ENCODE measurements at regions of chr7 and their contacts with region 1.

Region 1: DNA sequence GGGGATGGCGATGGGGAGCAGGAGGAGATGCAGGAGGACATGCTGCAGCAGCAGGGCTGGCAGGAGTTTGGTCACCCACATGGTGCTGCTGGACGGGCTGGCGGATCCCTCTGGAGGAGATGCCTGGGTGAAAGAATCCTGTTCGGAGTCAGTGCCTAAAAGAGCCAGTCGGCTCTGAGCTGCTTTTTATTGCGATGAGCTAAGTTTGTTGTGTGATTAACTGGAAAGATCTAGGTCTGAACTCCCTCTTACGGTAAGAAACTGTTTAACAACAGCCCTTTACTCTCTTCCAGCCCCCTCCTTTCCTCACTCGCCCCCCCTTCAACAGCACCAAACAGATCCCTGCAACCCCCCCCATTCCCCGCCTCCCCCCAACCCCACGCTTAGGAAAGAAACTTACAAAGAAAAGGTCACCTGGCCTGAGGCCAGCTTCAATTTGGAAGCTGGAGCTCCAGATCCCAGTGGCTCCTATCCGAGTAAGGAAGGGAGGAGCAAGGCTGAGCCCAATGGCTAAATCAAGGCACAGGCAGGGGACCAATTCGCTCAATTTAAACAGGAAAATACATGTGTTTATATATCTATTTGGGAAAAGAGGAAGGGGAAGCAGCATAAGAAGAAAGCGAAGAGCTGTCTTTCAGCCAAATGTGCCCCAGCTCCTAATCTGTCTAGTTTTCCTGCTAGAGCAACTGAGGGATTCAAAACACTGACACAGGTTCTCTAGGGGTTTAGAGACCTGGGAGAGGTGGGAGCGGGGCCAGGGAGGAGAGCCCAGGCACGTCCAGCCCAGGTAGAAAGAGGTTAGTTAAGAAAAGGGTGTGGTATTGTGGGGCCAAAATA is at the start of gene HGF:
- DNase-seq: no peak
- ATAC-seq: no peak
- H3K4me3 ChIP-seq: no peak within 1 kb of the TSS
- H3K4me3 Mint-ChIP-seq: no peak within 1 kb of the TSS
- H3K27ac ChIP-seq: no peak within 1 kb of the TSS
- H3K27ac Mint-ChIP-seq: no peak within 1 kb of the TSS
- H3K4me1 ChIP-seq: no peaks in the 10 kb centered on the region
- H3K4me1 Mint-ChIP-seq: no peaks in the 10 kb centered on the region
- H3K27me3 ChIP-seq: no peaks in the 10 kb centered on the region
- H3K27me3 Mint-ChIP-seq: no peaks in the 10 kb centered on the region
- CTCF ChIP-seq: no peak
- total RNA-seq, gene HGF: 0.43 to 7.4 (median 0.94) TPM

Region 2: DNA sequence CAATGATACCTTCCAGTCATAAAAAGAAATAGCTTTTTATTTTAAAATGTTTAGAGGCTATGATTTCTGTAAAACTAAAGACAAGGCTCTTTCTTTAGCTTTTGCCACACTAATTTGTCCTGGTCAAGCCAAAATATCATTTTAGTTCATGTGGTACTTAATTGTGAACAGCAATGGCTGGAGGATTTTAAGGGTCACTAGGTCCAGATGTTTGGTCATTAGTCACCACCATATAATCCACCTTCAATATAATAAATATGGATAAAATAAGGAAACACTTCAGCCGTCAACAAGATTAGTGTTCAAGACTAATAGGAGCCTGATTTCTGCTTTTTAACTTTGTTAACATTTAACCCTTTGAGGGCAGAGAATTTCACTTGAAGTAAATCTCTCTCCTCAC is 49.8 kb after region 1 on chr7:
- intact Hi-C with region 1: loop called (anchors 10 kb)
- DNase-seq: no peak
- ATAC-seq: no peak
- H3K4me3 ChIP-seq: no peak overlapping the region
- H3K4me3 Mint-ChIP-seq: no peak overlapping the region
- H3K27ac ChIP-seq: no peak overlapping the region
- H3K27ac Mint-ChIP-seq: no peak overlapping the region
- H3K4me1 ChIP-seq: no peaks in the 10 kb centered on the region
- H3K4me1 Mint-ChIP-seq: no peaks in the 10 kb centered on the region
- H3K27me3 ChIP-seq: no peaks in the 10 kb centered on the region
- H3K27me3 Mint-ChIP-seq: no peaks in the 10 kb centered on the region
- CTCF ChIP-seq: no peak

Measured in natural killer cell (primary cell).